ENCODE measurements at regions of chr11 and their contacts with region 1.

Region 1: DNA sequence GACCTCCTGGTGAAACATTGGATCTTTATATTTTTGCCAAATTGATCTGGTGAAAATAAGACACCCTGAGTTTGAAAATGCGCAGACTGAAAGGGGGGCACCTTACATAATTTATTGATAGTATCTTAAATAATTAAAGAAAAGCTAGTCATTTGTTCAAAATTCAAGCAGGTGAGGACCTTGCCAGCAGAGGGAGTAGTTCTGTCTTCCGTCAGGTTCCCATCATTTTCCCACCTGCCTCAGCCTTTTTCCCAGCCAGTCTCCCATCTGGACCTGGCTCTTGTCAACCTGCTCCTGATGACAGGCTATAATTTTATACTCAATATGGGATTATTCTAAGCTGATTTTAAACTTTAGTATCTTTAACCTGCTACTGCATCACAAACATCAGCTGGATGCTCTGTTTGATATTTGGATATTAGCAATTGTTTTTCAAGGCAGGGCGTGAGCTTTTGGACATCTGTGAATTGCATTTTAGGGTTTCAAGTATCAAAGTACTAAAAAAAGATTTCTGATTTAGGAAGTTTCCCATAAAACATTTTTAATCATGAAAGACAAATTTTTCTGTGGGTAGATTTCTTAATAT is 132.0 kb downstream of the ELP4 start:
- DNase-seq: peak; percentile 39
- ATAC-seq: peak; percentile 69; the same call in 1 of the 2 replicates
- H3K4me3 ChIP-seq: no peak overlapping the region
- H3K27ac ChIP-seq: no peak overlapping the region
- H3K4me1 ChIP-seq: peaks cover 8 to 13% of the 10 kb centered on the region in 2 experiments
- H3K27me3 ChIP-seq: no peaks in the 10 kb centered on the region
- CTCF ChIP-seq: peak; percentile 43 to 72 (median 69); a peak in 5 of 6 replicates
- POLR2A ChIP-seq: no peak
- RAD21 ChIP-seq: peak; percentile 60

Region 2: DNA sequence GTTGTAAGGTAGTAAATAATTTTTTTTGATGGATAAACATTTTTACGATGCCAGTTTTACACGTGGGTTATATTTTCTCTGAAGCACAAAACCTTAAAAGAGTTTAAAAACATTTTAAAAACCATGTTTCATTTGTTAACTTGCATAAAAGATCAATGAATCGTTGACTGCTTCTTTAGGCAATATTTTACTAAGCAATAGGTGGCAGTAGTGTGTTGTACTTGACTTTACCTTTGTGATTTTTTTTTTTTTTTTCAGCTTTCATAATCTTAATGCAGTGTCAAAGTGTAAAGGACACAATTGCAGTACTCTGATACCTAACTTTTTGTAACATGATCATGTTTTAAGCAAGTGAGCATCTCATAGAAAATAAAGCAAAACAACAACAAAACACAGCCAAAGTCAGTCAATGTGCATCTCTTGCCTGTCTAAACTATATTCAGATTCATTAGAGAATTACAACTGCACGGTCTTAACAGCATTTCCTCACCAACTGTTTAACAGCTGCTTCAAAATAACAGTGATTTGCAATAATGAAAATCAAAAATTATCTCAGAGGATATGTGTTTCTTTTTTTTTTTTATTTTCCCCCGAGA is 244.2 kb before region 1 on chr11:
- CTCF ChIA-PET with region 1: no interaction called
- POLR2A ChIA-PET with region 1: no interaction called
- RAD21 ChIA-PET with region 1: no interaction called
- intact Hi-C with region 1: loop called (anchors 5 kb)
- DNase-seq: no peak
- ATAC-seq: no peak
- H3K4me3 ChIP-seq: no peak overlapping the region
- H3K27ac ChIP-seq: no peak overlapping the region
- H3K4me1 ChIP-seq: no peaks in the 10 kb centered on the region
- H3K27me3 ChIP-seq: no peaks in the 10 kb centered on the region
- CTCF ChIP-seq: peak; percentile 37 to 72 (median 51); a peak in 4 of 6 replicates
- POLR2A ChIP-seq: no peak
- RAD21 ChIP-seq: peak; percentile 59

Region 3: DNA sequence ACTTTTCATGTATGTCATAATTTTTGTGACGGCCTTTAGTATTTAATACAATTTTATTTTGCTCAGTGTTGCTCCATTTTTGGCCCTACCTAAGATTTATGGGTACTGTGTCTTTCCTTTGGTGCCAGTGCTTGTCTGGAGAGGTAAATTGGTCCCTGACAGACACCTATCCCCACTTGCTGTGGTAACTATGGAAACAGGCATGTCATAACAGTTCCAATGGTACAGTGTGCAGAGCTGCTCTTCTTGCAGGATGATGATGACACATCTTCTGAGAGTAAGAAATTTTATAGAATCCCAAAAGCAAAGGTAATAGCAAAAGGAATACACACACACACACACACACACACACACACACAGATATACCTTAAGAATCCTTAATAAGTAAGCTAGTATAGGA is 13.5 kb before region 1 on chr11:
- CTCF ChIA-PET with region 1: interaction called, 24 read pairs
- POLR2A ChIA-PET with region 1: no interaction called
- RAD21 ChIA-PET with region 1: no interaction called
- intact Hi-C with region 1: no loop called
- DNase-seq: no peak
- ATAC-seq: no peak
- H3K4me3 ChIP-seq: no peak overlapping the region
- H3K27ac ChIP-seq: no peak overlapping the region
- H3K4me1 ChIP-seq: no peaks in the 10 kb centered on the region
- H3K27me3 ChIP-seq: no peaks in the 10 kb centered on the region
- CTCF ChIP-seq: no peak
- POLR2A ChIP-seq: no peak
- RAD21 ChIP-seq: no peak

Region 4: GRCh38 chr11:31655483-31655882 is 13.9 kb after region 1 on chr11:
- CTCF ChIA-PET with region 1: interaction called, 24 read pairs
- POLR2A ChIA-PET with region 1: no interaction called
- RAD21 ChIA-PET with region 1: no interaction called
- intact Hi-C with region 1: no loop called
- DNase-seq: peak; percentile 84
- ATAC-seq: peak; percentile 99
- H3K4me3 ChIP-seq: peak overlapping the region in 1 of 2 experiments; percentile 0; a peak in 1 of 4 replicates
- H3K27ac ChIP-seq: no peak overlapping the region
- H3K4me1 ChIP-seq: peaks cover 15 to 28% of the 10 kb centered on the region in 2 experiments
- H3K27me3 ChIP-seq: no peaks in the 10 kb centered on the region
- CTCF ChIP-seq: no peak
- POLR2A ChIP-seq: no peak
- RAD21 ChIP-seq: no peak

Region 5: GRCh38 chr11:31671681-31672080 is 30.1 kb after region 1 on chr11:
- CTCF ChIA-PET with region 1: no interaction called
- POLR2A ChIA-PET with region 1: no interaction called
- RAD21 ChIA-PET with region 1: no interaction called
- intact Hi-C with region 1: no loop called
- DNase-seq: no peak
- ATAC-seq: no peak
- H3K4me3 ChIP-seq: no peak overlapping the region
- H3K27ac ChIP-seq: no peak overlapping the region
- H3K4me1 ChIP-seq: no peaks in the 10 kb centered on the region
- H3K27me3 ChIP-seq: no peaks in the 10 kb centered on the region
- CTCF ChIP-seq: no peak
- POLR2A ChIP-seq: no peak
- RAD21 ChIP-seq: no peak

Region 6: GRCh38 chr11:31870609-31871309 is 229.2 kb after region 1 on chr11:
- CTCF ChIA-PET with region 1: interaction called, 23 read pairs
- POLR2A ChIA-PET with region 1: no interaction called
- RAD21 ChIA-PET with region 1: interaction called, 3 to 7 read pairs
- intact Hi-C with region 1: loop called (anchors 1 kb)
- DNase-seq: peak; percentile 48
- ATAC-seq: peak; percentile 87
- H3K4me3 ChIP-seq: no peak overlapping the region
- H3K27ac ChIP-seq: no peak overlapping the region
- H3K4me1 ChIP-seq: peaks cover 0 to 9% of the 10 kb centered on the region in 2 experiments; a peak in 2 of 4 replicates
- H3K27me3 ChIP-seq: no peaks in the 10 kb centered on the region
- CTCF ChIP-seq: peak; percentile 80 to 87 (median 81)
- POLR2A ChIP-seq: no peak
- RAD21 ChIP-seq: peak; percentile 93

Region 7: DNA sequence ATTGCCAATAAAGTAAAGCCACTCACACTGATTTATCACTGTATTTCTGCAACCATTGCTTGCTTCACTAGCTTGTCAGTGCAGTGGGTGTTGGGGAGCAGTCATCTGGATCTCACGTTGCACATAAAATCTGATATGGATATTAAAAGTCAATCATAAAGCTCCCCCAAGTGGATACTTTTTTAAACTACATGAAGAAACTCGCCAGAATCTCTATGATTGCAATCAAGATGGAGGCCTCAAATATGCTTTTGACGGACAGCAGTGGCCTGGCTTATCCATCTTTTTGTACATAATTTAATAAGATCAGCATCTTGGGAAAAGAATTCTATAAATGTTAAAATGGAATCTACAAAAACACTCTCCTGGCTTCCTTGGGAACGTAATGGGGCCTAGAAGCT is 656.0 kb after region 1 on chr11:
- CTCF ChIA-PET with region 1: interaction called, 6 read pairs
- POLR2A ChIA-PET with region 1: no interaction called
- RAD21 ChIA-PET with region 1: no interaction called
- intact Hi-C with region 1: loop called (anchors 10 kb)
- DNase-seq: peak; percentile 31
- ATAC-seq: peak; percentile 84
- H3K4me3 ChIP-seq: no peak overlapping the region
- H3K27ac ChIP-seq: no peak overlapping the region
- H3K4me1 ChIP-seq: no peaks in the 10 kb centered on the region
- H3K27me3 ChIP-seq: no peaks in the 10 kb centered on the region
- CTCF ChIP-seq: peak; percentile 26 to 58 (median 53); a peak in 4 of 6 replicates
- POLR2A ChIP-seq: no peak
- RAD21 ChIP-seq: peak; percentile 69

Measured in HCT116 (cell line).